ENCODE measurements at regions of chr22 and their contacts with region 1.

Region 1: DNA sequence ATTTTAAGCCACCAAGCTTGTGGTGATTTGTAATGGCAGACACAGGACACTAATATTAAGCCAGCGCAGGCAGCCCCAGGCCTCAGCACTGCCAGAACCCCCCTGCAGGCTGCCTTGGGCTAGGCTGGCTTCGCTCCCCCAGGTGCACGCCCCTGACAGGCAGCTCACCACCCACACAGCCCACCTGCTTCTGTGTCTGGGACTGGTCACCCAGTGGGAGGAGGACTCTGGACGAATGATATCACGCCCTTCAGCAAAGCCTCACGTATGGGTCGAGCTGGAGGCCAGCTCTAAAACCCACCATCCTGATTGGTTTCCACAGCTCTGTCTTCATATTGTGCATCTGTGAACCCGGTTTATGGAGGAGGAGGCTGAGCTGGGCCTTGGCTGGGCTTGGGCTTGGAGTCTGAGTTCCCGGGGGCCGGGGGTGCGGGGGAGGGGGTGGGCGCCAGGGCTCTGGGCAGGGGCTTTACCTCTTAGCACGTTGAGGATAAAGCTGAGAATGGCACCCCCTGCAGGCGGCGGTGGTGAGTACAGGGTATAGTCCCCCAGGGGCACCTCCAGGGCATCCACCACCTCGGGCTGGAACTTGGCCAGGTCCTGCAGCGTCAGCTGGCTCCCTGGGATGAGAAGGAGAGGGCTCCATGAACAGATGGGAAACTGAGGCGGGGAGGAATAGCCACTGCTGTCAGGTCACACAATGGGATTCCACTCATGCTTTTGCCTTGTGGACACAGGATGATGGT is 13.8 kb downstream of the GGT5 start:
- DNase-seq: peak; percentile 74
- ATAC-seq: peak; percentile 84
- H3K4me3 Mint-ChIP-seq: no peak overlapping the region
- H3K27ac Mint-ChIP-seq: no peak overlapping the region
- H3K4me1 Mint-ChIP-seq: peaks cover 3% of the 10 kb centered on the region
- H3K27me3 Mint-ChIP-seq: no peaks in the 10 kb centered on the region

Region 2: GRCh38 chr22:24189249-24190158 is 41.6 kb before region 1 on chr22:
- CTCF ChIA-PET with region 1: interaction called, 18 read pairs
- DNase-seq: peak; percentile 73
- ATAC-seq: peak; percentile 79
- H3K4me3 Mint-ChIP-seq: no peak overlapping the region
- H3K27ac Mint-ChIP-seq: no peak overlapping the region
- H3K4me1 Mint-ChIP-seq: no peaks in the 10 kb centered on the region
- H3K27me3 Mint-ChIP-seq: no peaks in the 10 kb centered on the region

Region 3: GRCh38 chr22:24200616-24201212 is 30.4 kb before region 1 on chr22:
- CTCF ChIA-PET with region 1: interaction called, 30 read pairs
- DNase-seq: no peak
- ATAC-seq: no peak
- H3K4me3 Mint-ChIP-seq: no peak overlapping the region
- H3K27ac Mint-ChIP-seq: no peak overlapping the region
- H3K4me1 Mint-ChIP-seq: peaks cover 58% of the 10 kb centered on the region
- H3K27me3 Mint-ChIP-seq: peaks cover 11% of the 10 kb centered on the region

Region 4: GRCh38 chr22:24208012-24208749 is 22.9 kb before region 1 on chr22:
- CTCF ChIA-PET with region 1: interaction called, 17 read pairs
- DNase-seq: no peak
- ATAC-seq: peak; percentile 30
- H3K4me3 Mint-ChIP-seq: peak overlapping the region; percentile 6
- H3K27ac Mint-ChIP-seq: peak overlapping the region; percentile 89
- H3K4me1 Mint-ChIP-seq: peaks cover 48% of the 10 kb centered on the region
- H3K27me3 Mint-ChIP-seq: no peaks in the 10 kb centered on the region

Region 5: DNA sequence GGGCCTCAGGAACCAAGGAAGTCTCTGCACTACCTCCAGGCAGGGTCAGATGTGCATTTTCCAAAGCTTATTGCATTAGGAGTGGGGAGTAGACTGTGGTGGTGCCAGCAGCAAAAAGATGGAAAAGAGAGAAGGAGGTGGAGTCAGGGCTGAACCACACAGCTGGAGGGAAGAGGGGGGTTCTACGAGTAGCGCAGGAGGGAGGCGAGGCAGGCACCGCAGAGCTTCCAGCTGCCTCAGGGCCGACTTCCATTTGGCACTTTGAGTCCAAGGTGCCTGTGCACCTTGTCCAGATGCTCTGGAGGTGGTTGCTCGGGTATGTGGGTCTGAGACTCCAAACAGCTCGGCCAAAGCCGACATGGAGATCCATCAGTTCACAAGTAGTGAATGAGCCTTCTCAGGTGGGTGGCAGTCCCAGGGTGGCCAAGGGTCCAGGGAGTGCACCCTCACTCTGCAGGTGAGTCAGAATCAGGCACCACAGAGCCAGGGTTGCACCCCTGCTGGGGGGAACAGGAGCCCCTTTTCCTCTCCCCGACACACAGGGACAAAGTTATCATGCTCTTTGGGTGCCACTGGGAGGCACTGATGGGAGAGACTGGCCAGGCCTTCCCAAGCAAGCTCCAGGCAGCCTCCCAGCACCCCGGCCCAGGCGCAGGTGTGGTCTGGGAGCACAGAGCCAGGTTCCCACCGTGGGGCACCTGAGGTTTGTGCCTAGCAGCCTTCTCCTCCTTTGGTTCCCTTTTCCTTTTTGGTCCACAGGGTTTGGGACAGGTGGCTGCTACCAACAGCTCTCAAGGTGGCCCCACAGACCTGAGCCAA is 16.4 kb before region 1 on chr22:
- CTCF ChIA-PET with region 1: interaction called, 17 read pairs
- DNase-seq: no peak
- ATAC-seq: no peak
- H3K4me3 Mint-ChIP-seq: no peak overlapping the region
- H3K27ac Mint-ChIP-seq: no peak overlapping the region
- H3K4me1 Mint-ChIP-seq: peaks cover 14% of the 10 kb centered on the region
- H3K27me3 Mint-ChIP-seq: peaks cover 3% of the 10 kb centered on the region

Region 6: DNA sequence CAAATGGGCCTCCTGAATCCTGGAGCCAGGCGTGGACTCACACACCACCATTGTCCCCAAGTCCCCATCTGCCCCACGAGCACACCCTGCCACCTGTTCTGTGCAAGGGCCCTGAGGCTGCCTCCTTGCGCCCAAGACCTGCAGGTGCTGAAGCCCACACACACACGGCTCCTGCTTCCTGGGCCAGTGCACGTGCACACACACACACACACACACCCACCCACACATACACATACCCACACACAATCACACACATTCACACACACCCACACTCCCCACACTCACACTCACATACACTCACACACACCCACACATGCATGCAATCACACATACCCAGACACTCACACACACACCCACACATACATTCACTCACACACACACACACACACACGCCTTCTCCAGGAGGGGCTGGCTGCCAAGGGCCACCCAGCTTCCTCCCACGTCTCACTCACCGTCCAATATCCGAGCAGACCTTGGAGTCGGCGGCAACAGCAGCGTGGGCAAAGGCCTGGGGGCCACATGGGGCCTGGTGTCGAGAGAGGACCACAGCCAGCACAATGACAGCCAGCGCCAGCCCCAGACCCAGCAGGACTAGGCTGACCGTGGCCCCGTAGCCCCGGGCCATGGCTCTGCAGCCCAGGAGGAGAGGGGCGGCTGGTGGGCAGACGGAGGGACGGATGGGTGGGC is 13.2 kb after region 1 on chr22:
- CTCF ChIA-PET with region 1: interaction called, 39 read pairs
- DNase-seq: no peak
- ATAC-seq: no peak
- H3K4me3 Mint-ChIP-seq: no peak overlapping the region
- H3K27ac Mint-ChIP-seq: peak overlapping the region; percentile 33
- H3K4me1 Mint-ChIP-seq: peaks cover 38% of the 10 kb centered on the region
- H3K27me3 Mint-ChIP-seq: no peaks in the 10 kb centered on the region

Region 7: DNA sequence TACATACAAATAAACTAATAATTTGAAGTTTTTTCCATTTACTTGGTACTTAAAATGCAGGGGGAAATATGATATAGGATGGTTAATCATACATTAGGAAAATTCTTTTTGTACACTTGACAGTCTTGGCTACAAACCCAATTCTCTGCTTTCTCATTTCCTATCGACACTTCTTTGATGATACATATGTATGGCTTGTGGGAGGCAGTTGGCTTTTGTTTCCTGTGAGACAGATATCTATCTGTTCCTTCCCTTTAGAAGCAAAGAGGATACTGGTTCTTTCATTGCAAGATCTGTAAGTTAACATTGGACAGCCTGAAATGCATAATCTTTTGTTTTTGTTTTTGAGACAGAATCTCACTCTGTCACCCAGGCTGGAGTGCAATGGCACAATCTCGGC is 148.5 kb after region 1 on chr22:
- CTCF ChIA-PET with region 1: no interaction called
- DNase-seq: no peak
- ATAC-seq: peak; percentile 90
- H3K4me3 Mint-ChIP-seq: no peak overlapping the region
- H3K27ac Mint-ChIP-seq: peak overlapping the region; percentile 71
- H3K4me1 Mint-ChIP-seq: peaks cover 26% of the 10 kb centered on the region
- H3K27me3 Mint-ChIP-seq: no peaks in the 10 kb centered on the region